ENCODE measurements at regions of chr13 and their contacts with region 1.

Region 1: DNA sequence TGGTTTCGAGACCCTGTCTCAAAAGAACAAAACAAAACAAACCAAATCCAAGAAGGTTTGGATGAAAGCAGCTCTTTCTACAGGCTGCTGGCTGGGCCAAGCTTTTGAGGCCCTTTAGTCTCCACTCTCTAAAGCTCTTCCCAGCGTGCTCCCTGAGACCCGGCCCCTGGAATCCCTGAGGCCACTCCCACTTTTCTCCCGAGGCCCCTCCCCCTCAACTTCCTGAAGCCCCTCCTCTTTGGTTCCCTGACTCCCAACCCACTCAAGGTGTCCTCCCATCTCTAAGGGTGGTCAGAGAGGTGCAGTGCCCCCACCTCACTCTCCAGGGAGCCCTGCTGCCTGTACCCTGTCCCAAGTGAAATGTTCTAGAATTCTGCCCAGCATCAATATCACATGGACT is 10.6 kb downstream of the ERICH6B start:
- DNase-seq: no peak
- ATAC-seq: no peak
- H3K4me3 ChIP-seq: no peak overlapping the region
- H3K27ac ChIP-seq: no peak overlapping the region
- H3K4me1 ChIP-seq: no peaks in the 10 kb centered on the region
- H3K27me3 ChIP-seq: peaks cover 0 to 2% (median 0%) of the 10 kb centered on the region in 3 donors
- CTCF ChIP-seq: no peak

Region 2: GRCh38 chr13:44703371-44703770 is 901.5 kb before region 1 on chr13:
- intact Hi-C with region 1: no loop called
- DNase-seq: no peak
- ATAC-seq: peak in 2 of 4 donors; percentile 57 to 66
- H3K4me3 ChIP-seq: no peak overlapping the region
- H3K27ac ChIP-seq: no peak overlapping the region
- H3K4me1 ChIP-seq: no peaks in the 10 kb centered on the region
- H3K27me3 ChIP-seq: no peaks in the 10 kb centered on the region
- CTCF ChIP-seq: no peak

Region 3: DNA sequence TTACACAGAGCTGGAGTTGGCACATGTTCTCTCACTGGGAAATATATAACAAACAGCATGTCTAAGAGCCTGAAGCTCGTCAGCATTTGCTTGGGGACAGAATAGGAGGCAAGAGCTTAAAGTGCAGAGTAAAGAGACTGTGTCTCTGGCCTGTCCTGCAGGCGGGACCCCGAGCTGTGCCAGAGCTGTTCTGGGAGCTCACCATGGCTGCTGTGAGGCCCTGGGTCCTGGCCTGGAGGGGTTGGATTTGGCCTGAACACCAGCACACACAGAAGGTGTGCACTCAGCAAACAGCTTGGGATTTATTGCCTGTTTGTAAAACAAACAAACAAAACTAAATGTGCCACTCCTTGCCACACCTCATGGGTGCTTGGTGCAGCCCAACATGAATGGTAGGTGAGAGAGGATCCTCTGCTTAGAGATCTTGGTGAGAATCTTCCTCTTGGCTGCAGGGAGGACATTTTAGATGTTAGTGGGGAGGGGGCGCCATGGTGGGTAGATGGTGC is 50.2 kb before region 1 on chr13:
- intact Hi-C with region 1: loop called in 1 of 2 experiments (anchors 1 kb)
- DNase-seq: no peak
- ATAC-seq: no peak
- H3K4me3 ChIP-seq: no peak overlapping the region
- H3K27ac ChIP-seq: no peak overlapping the region
- H3K4me1 ChIP-seq: no peaks in the 10 kb centered on the region
- H3K27me3 ChIP-seq: no peaks in the 10 kb centered on the region
- CTCF ChIP-seq: no peak

Measured in psoas muscle (tissue), 8 donors.